Activated T-helper 2 cell treated with anti-CD3 and anti-CD28 coated beads, Interferon-gamma antibody, Interleukin-2, Interleukin-4, amounts not matched to agents 10 μg/mL and 5 μg/mL and 100 μg/mL, durations not matched to agents 14 hours and 24 hours and 36 hours (primary cell): ENCODE measurements at regions of chrX and their contacts with region 1.

Region 1: GRCh38 chrX:43644124-43644701 is 11.9 kb upstream of the MAOA start:
- DNase-seq: no peak
- H3K4me3 Mint-ChIP-seq: peak overlapping the region; percentile 13
- H3K27ac Mint-ChIP-seq: peak overlapping the region; percentile 85
- H3K4me1 Mint-ChIP-seq: peaks cover 45% of the 10 kb centered on the region
- H3K27me3 Mint-ChIP-seq: no peaks in the 10 kb centered on the region

Region 2: GRCh38 chrX:43386875-43387274 is 257.3 kb before region 1 on chrX:
- intact Hi-C with region 1: no loop called
- DNase-seq: no peak
- H3K4me3 Mint-ChIP-seq: no peak overlapping the region
- H3K27ac Mint-ChIP-seq: no peak overlapping the region
- H3K4me1 Mint-ChIP-seq: peaks cover 3% of the 10 kb centered on the region
- H3K27me3 Mint-ChIP-seq: no peaks in the 10 kb centered on the region

Region 3: GRCh38 chrX:43456063-43456462 is 188.2 kb before region 1 on chrX:
- intact Hi-C with region 1: no loop called
- DNase-seq: no peak
- H3K4me3 Mint-ChIP-seq: no peak overlapping the region
- H3K27ac Mint-ChIP-seq: no peak overlapping the region
- H3K4me1 Mint-ChIP-seq: no peaks in the 10 kb centered on the region
- H3K27me3 Mint-ChIP-seq: no peaks in the 10 kb centered on the region

Region 4: DNA sequence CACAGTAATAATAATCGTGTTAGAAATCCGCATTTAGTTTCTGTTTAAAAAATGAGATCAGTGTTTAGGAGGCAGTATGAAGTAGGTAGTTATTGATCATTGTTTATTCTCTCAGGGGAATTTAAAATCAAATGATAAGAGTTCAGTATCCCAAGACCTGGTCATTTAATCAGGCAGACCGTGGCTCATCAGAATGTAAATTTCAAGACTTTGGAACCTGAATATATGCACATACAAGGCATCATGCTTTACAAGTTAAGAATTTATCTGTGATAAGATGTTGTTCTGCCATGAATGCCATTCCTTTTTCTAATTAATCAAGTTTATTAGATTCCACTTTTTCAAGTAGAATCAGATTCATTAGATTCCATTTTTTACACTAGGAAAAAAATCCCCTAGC is 121.6 kb before region 1 on chrX:
- intact Hi-C with region 1: no loop called
- DNase-seq: no peak
- H3K4me3 Mint-ChIP-seq: no peak overlapping the region
- H3K27ac Mint-ChIP-seq: no peak overlapping the region
- H3K4me1 Mint-ChIP-seq: no peaks in the 10 kb centered on the region
- H3K27me3 Mint-ChIP-seq: no peaks in the 10 kb centered on the region

Region 5: DNA sequence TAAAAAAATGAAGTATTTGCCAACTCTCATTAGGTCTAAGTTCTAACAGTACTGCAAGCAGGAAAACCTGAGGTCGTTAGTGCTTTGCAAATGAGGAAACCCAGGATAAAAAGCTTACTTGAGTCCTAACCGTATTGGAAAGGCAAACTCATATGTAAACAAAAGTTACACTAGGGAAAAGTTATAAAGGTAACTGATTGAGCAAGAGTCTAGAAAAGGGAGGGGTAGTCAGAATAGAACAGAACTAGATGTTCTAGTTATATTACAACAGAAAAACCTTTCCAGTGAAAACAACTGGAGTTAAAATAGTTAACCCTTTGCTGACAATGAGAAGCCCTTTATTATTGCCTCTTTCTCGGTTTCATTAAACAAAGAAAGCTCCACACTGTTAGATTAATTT is 54.5 kb before region 1 on chrX:
- intact Hi-C with region 1: loop called (anchors 1 kb)
- DNase-seq: no peak
- H3K4me3 Mint-ChIP-seq: no peak overlapping the region
- H3K27ac Mint-ChIP-seq: peak overlapping the region; percentile 63
- H3K4me1 Mint-ChIP-seq: peaks cover 8% of the 10 kb centered on the region
- H3K27me3 Mint-ChIP-seq: no peaks in the 10 kb centered on the region

Region 6: DNA sequence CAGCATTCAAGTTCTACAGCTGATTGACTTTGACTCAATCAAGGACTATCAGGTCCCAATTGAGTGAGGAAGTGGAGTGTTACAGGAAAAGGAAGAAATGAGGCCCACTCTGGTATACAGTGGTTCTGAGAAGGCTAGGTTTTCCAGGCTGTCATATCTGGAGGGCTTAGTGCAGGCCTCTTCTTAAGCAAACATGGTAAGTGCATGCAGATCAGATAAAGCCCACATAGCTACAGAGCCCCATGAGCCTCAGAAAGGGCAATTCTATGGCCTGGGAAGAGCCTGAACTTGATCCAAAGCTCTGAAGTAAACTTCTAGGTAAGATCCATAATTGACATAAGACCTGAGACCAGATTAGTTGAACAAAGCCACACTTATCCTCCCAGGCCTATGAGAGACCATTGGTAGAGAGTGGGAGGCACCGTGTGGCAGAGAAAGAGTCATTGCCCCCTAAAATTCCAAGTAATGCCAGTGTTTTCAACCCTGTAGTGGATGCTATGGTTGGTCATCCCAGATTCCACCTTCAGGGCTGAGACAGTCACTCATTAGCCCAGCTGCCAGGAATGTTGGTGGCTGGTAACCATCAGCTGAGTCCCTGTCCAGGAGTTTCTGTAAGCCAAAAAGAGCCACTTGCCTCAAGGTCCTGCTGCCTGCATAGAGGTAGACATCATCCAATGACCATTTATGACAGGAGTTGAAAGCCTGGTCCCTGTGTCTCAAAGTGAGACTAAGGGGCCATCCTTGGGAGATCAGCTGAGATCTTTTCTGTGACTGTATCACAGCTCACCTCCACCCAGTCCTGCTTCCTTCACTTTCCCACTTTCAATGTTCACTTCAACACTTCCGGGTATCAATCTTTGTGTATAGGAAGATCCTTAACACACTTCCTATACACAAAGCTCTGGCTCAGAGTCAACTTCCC is 16.8 kb before region 1 on chrX:
- intact Hi-C with region 1: loop called (anchors 1 kb)
- DNase-seq: no peak
- H3K4me3 Mint-ChIP-seq: no peak overlapping the region
- H3K27ac Mint-ChIP-seq: peak overlapping the region; percentile 86
- H3K4me1 Mint-ChIP-seq: peaks cover 26% of the 10 kb centered on the region
- H3K27me3 Mint-ChIP-seq: no peaks in the 10 kb centered on the region

Region 7: DNA sequence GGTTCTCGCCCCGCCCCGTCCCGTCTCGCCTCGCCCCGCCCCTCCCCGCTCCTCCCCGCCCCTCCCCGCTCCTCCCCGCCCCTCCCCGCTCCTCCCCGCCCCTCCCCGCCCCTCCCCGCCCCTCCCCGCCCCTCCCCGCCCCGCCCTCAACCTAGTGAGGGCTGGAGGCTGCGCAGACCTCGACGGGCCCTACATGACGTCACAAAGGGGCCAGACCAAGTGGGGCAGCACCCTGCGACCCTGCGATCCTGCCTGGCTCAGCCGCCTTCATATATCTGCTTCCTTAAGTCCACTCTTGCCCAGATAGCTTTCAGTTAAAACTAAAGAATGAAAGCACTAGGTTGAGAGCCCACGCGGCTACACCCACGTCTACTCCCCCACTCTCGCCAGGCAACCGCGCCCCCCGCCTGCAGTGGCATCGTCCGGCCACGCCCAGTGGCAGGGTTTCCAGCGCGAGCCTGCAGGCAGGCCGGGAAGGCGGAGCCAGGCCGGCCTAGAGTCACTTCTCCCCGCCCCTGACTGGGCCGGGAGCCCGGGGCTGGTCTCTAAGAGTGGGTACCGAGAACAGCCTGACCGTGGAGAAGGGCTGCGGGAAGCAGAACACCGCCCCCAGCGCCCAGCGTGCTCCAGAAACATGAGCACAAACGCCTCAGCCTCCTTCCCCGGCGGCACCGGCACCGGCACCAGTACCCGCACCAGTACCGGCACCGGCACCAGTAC is 10.4 kb after region 1 on chrX:
- intact Hi-C with region 1: loop called (anchors 1 kb)
- DNase-seq: peak; percentile 86
- H3K4me3 Mint-ChIP-seq: peak overlapping the region; percentile 97
- H3K27ac Mint-ChIP-seq: peak overlapping the region; percentile 100
- H3K4me1 Mint-ChIP-seq: peaks cover 17% of the 10 kb centered on the region
- H3K27me3 Mint-ChIP-seq: no peaks in the 10 kb centered on the region

Region 8: GRCh38 chrX:43666311-43666912 is 22.2 kb after region 1 on chrX:
- intact Hi-C with region 1: no loop called
- DNase-seq: no peak
- H3K4me3 Mint-ChIP-seq: peak overlapping the region; percentile 19
- H3K27ac Mint-ChIP-seq: peak overlapping the region; percentile 63
- H3K4me1 Mint-ChIP-seq: peaks cover 34% of the 10 kb centered on the region
- H3K27me3 Mint-ChIP-seq: no peaks in the 10 kb centered on the region

Region 9: GRCh38 chrX:43750248-43750676 is 106.0 kb after region 1 on chrX:
- intact Hi-C with region 1: loop called (anchors 5 kb)
- DNase-seq: peak; percentile 26
- H3K4me3 Mint-ChIP-seq: no peak overlapping the region
- H3K27ac Mint-ChIP-seq: peak overlapping the region; percentile 42
- H3K4me1 Mint-ChIP-seq: peaks cover 40% of the 10 kb centered on the region
- H3K27me3 Mint-ChIP-seq: no peaks in the 10 kb centered on the region

Region 10: DNA sequence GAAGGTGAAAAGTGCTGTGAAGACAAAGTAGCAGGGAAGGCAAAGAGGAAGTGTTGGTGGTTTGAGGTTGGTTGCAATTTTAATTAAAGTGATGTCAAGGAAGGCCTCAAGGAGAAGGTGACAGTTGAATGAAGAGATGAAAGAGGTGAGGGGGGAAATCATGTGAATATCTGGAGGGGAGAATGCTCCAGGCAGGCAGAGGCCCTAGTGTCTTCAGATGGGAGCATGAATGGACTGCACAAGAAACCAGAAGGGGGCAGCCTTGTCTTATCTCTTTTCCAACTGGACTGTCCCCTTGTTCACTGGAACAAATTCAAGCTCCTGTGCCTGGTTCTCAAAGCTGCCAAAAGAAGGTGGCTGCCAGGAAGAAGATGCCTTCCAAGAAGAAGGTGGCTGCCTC is 169.7 kb after region 1 on chrX:
- intact Hi-C with region 1: loop called (anchors 5 kb)
- DNase-seq: peak; percentile 12
- H3K4me3 Mint-ChIP-seq: no peak overlapping the region
- H3K27ac Mint-ChIP-seq: peak overlapping the region; percentile 81
- H3K4me1 Mint-ChIP-seq: peaks cover 46% of the 10 kb centered on the region
- H3K27me3 Mint-ChIP-seq: no peaks in the 10 kb centered on the region